BJ (cell line): ENCODE measurements at regions of chr10 and their contacts with region 1.

Region 1: GRCh38 chr10:101012525-101013364 is 13.1 kb downstream of the LZTS2 start:
- DNase-seq: peak; percentile 72
- H3K4me3 ChIP-seq: no peak overlapping the region
- H3K27me3 ChIP-seq: no peaks in the 10 kb centered on the region
- CTCF ChIP-seq: peak; percentile 77

Region 2: DNA sequence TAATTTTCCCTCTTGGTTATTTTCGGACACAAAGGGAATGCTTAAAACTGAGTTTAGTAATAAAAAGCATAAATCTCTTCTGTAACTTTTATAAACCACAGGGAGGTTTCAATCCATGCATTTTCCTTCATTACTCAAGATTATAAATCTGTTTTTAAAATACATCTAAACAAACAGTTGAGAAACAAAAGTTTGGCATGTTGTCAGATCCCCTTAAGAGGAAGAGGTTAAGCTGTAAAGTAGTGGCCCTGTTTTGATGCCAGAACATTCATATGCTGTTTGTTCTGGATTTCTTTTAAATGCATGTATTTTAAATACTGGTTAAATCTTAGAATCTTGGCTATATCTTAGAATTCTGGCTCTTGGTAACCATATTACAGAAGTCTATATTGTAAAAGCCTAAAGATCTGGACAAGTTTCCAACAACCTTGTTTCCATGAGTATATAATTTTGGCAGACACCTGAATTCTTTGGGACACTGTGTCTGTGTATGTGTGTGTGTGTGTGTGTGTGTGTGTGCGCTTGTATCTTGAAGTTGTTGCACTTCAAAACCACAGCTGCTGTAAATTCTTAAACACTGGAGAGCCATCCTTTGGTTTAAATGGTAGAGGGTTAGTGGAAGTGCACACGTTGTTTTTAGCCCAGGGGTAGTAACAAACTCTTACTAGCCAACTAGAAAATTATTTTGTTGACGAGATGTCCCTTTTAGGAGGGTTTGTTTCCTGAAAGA is 50.2 kb before region 1 on chr10:
- CTCF ChIA-PET with region 1: interaction called, 22 read pairs
- POLR2A ChIA-PET with region 1: no interaction called
- DNase-seq: no peak
- H3K4me3 ChIP-seq: no peak overlapping the region
- H3K27me3 ChIP-seq: no peaks in the 10 kb centered on the region
- CTCF ChIP-seq: no peak

Region 3: GRCh38 chr10:100998991-100999741 is 13.6 kb before region 1 on chr10:
- CTCF ChIA-PET with region 1: interaction called, 479 read pairs
- POLR2A ChIA-PET with region 1: interaction called, 3 read pairs
- DNase-seq: no peak
- H3K4me3 ChIP-seq: peak overlapping the region; percentile 71
- H3K27me3 ChIP-seq: no peaks in the 10 kb centered on the region
- CTCF ChIP-seq: peak; percentile 67

Region 4: DNA sequence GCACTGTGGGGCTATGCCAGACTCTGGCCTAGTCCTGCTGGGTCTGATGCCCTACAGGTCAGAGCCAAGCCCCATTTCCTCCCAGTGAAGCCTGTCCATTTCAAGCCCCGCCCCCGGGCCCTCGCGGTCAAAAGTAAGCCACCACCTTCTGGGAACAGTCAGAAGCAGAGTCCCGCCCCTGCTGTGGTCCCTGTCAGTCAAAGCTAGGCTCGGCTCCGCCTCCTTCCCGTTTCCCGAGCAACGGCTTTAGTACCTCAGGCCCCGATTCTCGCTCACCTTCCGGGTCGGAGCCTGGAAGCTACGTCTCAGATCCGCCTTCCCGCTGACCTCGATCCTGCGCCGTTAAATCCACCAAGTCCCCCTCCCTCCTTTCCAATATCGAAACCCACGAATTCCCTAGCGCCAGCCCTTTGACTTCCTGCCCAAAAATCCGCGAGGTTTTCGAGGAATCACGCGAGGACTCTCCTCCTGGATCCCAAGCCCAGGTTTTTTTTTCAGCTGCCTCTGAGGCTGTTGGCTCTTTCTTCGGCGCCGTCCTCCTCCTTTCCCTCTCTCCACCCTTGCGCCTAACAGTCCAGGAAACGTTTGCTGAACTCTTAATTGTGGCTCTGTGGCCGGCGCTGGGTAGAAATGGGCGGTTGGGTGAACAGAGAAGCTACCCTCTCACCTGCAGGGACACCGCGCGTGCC is 30.1 kb after region 1 on chr10:
- CTCF ChIA-PET with region 1: interaction called, 10 read pairs
- POLR2A ChIA-PET with region 1: no interaction called
- DNase-seq: peak; percentile 92
- H3K4me3 ChIP-seq: peak overlapping the region; percentile 47
- H3K27me3 ChIP-seq: peaks cover 3% of the 10 kb centered on the region; the same call in 1 of the 2 replicates
- CTCF ChIP-seq: no peak

Region 5: DNA sequence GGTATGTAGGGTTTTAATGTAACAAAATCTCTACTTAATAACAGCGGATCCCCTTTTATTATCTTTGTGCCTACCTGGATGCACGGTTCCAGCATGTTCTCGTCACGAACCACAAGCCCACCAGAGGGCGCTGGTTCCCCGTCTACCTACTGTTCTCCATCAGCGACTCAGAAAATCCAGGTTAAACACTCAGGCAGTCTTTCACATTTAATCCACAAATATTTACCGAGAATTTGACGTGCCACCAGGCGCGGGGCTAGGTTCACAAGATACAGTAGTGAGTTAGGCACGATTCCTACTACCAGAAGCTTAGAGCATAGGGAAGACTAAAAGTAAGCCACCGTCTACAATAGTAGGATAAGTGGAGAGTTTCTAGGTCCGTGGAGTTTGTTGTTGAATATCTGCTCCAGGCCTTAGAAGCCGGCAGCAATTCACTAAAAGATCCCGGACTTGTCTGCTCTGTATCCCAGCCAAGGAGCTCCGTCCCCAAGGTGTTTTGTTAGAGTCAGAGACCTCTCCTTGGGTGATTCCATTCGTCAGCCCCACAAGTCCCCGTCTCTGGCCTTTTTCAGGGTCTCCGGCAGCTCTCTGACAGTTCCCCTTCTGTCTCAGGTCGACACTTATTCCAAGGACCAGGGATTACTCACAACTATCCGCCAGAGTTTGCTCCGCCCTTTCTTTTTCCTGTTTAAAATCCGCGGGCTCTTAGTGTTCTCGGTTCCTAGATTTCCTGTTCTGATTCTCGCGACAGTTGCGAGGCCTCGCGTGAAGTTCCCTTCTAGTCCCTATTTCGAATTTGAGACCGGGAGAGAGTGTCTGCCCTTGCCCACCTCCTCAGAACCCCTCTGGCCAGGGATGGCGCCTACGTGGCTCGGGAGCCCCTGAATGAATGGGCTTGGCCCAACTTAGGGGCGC is 47.5 kb after region 1 on chr10:
- CTCF ChIA-PET with region 1: interaction called, 81 read pairs
- POLR2A ChIA-PET with region 1: no interaction called
- DNase-seq: no peak
- H3K4me3 ChIP-seq: peak overlapping the region; percentile 86
- H3K27me3 ChIP-seq: no peaks in the 10 kb centered on the region
- CTCF ChIP-seq: peak; percentile 87